ENCODE measurements at regions of chrX and their contacts with region 1.

Region 1: GRCh38 chrX:49884290-49884862 is 5.1 kb downstream of the USP27X start:
- DNase-seq: peak; percentile 11 to 53 (median 38)
- ATAC-seq: peak; percentile 51
- H3K4me3 ChIP-seq: no peak overlapping the region
- H3K4me3 Mint-ChIP-seq: peak overlapping the region in 2 of 10 donors; percentile 26 to 37
- H3K27ac ChIP-seq: no peak overlapping the region
- H3K27ac Mint-ChIP-seq: peak overlapping the region in 1 of 9 donors; percentile 72
- H3K4me1 ChIP-seq: peaks cover 10 to 15% of the 10 kb centered on the region in 2 donors
- H3K4me1 Mint-ChIP-seq: peaks cover 7 to 38% (median 30%) of the 10 kb centered on the region in 7 donors
- H3K27me3 ChIP-seq: no peaks in the 10 kb centered on the region
- H3K27me3 Mint-ChIP-seq: no peaks in the 10 kb centered on the region

Region 2: GRCh38 chrX:49922291-49923241 is 38.2 kb after region 1 on chrX and contains the start of gene CLCN5:
- CTCF ChIA-PET with region 1: interaction called, 11 read pairs
- POLR2A ChIA-PET with region 1: no interaction called
- intact Hi-C with region 1: loop called (anchors 1 kb)
- DNase-seq: peak; percentile 85 to 96 (median 94)
- ATAC-seq: peak; percentile 97
- H3K4me3 ChIP-seq: peak within 1 kb of the TSS; percentile 74
- H3K4me3 Mint-ChIP-seq: peak within 1 kb of the TSS; percentile 76 to 86 (median 83)
- H3K27ac ChIP-seq: peak within 1 kb of the TSS; percentile 61
- H3K27ac Mint-ChIP-seq: peak within 1 kb of the TSS; percentile 43 to 85 (median 57)
- H3K4me1 ChIP-seq: peaks cover 0 to 5% of the 10 kb centered on the region in 2 donors
- H3K4me1 Mint-ChIP-seq: peaks cover 0 to 16% (median 8%) of the 10 kb centered on the region in 7 donors
- H3K27me3 ChIP-seq: no peaks in the 10 kb centered on the region
- H3K27me3 Mint-ChIP-seq: no peaks in the 10 kb centered on the region
- total RNA-seq, gene CLCN5: 2.8 to 3.9 (median 3.8) TPM

Region 3: GRCh38 chrX:49991758-49992157 is 107.4 kb after region 1 on chrX:
- CTCF ChIA-PET with region 1: no interaction called
- POLR2A ChIA-PET with region 1: no interaction called
- intact Hi-C with region 1: no loop called
- DNase-seq: no peak
- ATAC-seq: no peak
- H3K4me3 ChIP-seq: no peak overlapping the region
- H3K4me3 Mint-ChIP-seq: no peak overlapping the region
- H3K27ac ChIP-seq: no peak overlapping the region
- H3K27ac Mint-ChIP-seq: no peak overlapping the region
- H3K4me1 ChIP-seq: no peaks in the 10 kb centered on the region
- H3K4me1 Mint-ChIP-seq: no peaks in the 10 kb centered on the region
- H3K27me3 ChIP-seq: no peaks in the 10 kb centered on the region
- H3K27me3 Mint-ChIP-seq: no peaks in the 10 kb centered on the region

Region 4: DNA sequence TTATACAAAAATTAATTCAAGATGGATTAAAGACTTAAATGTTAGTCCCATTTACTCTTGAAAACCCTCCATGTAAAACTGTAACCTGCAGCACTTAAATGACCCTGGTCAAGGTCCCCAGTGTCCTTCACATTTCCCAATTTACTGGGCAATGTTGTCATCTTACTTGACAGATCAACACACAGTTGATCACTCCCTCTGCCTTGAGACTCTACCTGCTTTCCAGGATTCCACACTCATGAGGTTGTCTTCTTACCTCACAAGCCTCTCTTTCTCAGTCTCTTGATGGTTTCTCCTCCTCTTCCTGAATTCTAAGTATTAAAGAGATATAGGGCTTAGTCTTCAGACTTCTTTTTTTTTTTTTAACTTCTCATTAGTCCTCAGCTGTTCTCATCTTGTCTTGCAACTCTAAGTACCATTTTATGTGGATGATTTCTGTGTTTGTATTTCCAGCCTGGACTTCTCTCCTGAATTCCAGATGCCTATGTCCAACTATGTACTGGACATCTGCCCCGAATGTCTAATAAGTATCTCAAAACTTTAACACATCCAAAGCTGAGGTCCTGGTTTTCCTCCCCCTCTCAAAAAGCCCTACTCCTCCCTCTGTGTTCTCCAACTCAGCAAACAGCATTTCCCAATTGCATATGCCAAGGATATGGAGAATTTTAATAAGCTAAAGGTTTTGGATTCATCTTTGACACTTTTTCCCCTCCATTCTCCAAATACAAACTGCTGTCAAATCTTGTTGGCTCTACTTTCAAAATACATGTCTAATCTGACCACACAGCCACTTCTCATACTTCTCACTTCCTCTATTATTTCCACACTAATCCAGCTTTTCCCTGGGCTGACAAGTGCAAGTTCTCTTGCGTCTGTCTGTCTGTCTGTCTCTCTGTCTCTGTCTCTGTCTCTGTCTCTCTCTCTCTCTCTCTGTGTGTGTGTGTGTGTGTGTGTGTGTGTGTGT is 117.7 kb after region 1 on chrX:
- CTCF ChIA-PET with region 1: no interaction called
- POLR2A ChIA-PET with region 1: no interaction called
- intact Hi-C with region 1: no loop called
- DNase-seq: no peak
- ATAC-seq: no peak
- H3K4me3 ChIP-seq: no peak overlapping the region
- H3K4me3 Mint-ChIP-seq: no peak overlapping the region
- H3K27ac ChIP-seq: no peak overlapping the region
- H3K27ac Mint-ChIP-seq: peak overlapping the region in 1 of 9 donors; percentile 45
- H3K4me1 ChIP-seq: no peaks in the 10 kb centered on the region
- H3K4me1 Mint-ChIP-seq: peaks cover 0 to 5% (median 0%) of the 10 kb centered on the region in 7 donors
- H3K27me3 ChIP-seq: no peaks in the 10 kb centered on the region
- H3K27me3 Mint-ChIP-seq: no peaks in the 10 kb centered on the region

Region 5: GRCh38 chrX:50579955-50580354 is 695.6 kb after region 1 on chrX:
- CTCF ChIA-PET with region 1: no interaction called
- POLR2A ChIA-PET with region 1: no interaction called
- intact Hi-C with region 1: loop called (anchors 1 to 10 kb)
- DNase-seq: peak in 6 of 9 donors; percentile 7 to 45 (median 27)
- ATAC-seq: no peak
- H3K4me3 ChIP-seq: no peak overlapping the region
- H3K4me3 Mint-ChIP-seq: no peak overlapping the region
- H3K27ac ChIP-seq: no peak overlapping the region
- H3K27ac Mint-ChIP-seq: peak overlapping the region in 1 of 9 donors; percentile 2
- H3K4me1 ChIP-seq: no peaks in the 10 kb centered on the region
- H3K4me1 Mint-ChIP-seq: peaks cover 0 to 1% (median 0%) of the 10 kb centered on the region in 7 donors
- H3K27me3 ChIP-seq: no peaks in the 10 kb centered on the region
- H3K27me3 Mint-ChIP-seq: peaks cover 0 to 12% (median 4%) of the 10 kb centered on the region in 5 donors

Measured in naive thymus-derived CD4-positive, alpha-beta T cell (primary cell).